ENCODE measurements at regions of chr17 and their contacts with region 1.

Region 1: DNA sequence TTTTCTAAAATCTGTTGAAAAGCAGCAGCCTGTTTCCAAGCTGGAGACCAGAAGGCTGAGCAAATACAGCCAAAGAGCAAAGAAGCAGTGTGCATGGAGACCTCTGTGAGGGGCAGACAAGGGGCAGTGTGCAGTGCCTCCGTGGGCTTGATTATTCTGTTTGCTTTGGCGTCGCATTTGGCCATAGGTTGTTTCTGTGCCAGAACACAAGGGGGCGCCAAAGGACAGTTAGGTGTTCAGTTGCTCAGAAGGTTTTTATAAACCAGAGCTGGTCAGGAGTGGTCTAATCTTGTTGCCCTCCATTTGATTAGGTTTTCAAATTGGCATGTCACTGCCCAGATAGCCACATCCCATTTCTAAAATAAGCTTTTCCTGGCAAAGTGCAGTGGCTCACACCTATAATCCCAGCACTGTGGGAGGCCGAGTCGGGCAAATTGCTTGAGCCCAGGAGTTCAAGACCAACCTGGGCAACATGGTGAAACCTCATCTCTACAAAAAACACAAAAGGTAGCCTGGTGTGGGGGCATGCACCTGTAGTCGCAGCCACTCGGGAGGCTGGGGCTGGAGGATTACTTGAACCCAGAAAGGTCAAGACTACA is 10.6 kb downstream of the MYH3 start:
- DNase-seq: peak; percentile 38 to 84 (median 67)
- ATAC-seq: peak; percentile 79
- H3K4me3 ChIP-seq: no peak overlapping the region
- H3K4me3 Mint-ChIP-seq: no peak overlapping the region
- H3K27ac ChIP-seq: no peak overlapping the region
- H3K27ac Mint-ChIP-seq: peak overlapping the region in 1 of 9 donors; percentile 9
- H3K4me1 ChIP-seq: no peaks in the 10 kb centered on the region
- H3K4me1 Mint-ChIP-seq: no peaks in the 10 kb centered on the region
- H3K27me3 ChIP-seq: no peaks in the 10 kb centered on the region
- H3K27me3 Mint-ChIP-seq: no peaks in the 10 kb centered on the region

Region 2: DNA sequence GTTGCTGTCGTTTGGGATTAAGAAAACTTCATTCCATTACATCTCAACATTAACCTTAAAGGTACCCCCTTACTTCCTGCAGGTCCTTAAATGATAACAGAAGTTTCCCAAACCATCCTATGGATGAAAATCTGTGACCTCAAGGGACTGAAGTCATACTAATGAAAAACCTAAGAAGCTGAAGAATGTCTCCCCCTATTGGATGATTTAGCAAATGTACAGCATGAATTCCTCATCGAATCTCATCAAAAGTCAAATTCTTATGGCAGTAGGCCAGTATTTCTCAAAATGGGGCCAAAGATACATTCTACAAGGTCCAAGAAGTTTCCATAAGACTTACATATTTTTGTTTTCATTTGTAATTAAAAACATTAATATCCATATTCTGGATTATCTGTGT is 37.4 kb after region 1 on chr17:
- CTCF ChIA-PET with region 1: no interaction called
- POLR2A ChIA-PET with region 1: no interaction called
- intact Hi-C with region 1: loop called in 1 of 2 experiments (anchors 1 kb)
- DNase-seq: no peak
- ATAC-seq: no peak
- H3K4me3 ChIP-seq: no peak overlapping the region
- H3K4me3 Mint-ChIP-seq: no peak overlapping the region
- H3K27ac ChIP-seq: no peak overlapping the region
- H3K27ac Mint-ChIP-seq: peak overlapping the region in 1 of 9 donors; percentile 18
- H3K4me1 ChIP-seq: no peaks in the 10 kb centered on the region
- H3K4me1 Mint-ChIP-seq: peaks cover 3 to 13% (median 11%) of the 10 kb centered on the region in 7 donors
- H3K27me3 ChIP-seq: no peaks in the 10 kb centered on the region
- H3K27me3 Mint-ChIP-seq: no peaks in the 10 kb centered on the region

Region 3: DNA sequence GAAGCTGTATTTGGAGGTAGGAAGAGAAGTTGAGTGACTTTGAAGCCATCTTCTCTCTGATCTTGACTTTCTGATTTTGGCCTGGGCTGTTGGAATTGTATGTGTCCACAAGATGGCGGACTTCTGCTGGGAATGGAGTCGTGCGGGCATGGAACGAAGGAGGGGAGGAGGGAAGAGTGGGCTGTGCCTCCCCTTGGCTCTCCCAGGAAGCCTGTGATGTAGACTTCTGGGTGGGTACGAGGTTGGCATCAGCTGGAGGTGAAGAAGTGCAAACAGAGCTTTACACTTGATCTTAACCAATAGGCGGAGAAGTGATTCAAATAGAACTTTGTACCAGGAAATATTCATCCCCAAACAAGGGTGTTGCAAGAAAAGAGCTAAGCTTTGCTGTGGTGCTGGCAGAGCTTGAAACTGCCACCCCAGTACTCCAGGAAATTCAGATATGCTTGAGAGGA is 90.7 kb after region 1 on chr17:
- CTCF ChIA-PET with region 1: interaction called, 12 read pairs
- POLR2A ChIA-PET with region 1: no interaction called
- intact Hi-C with region 1: loop called in 1 of 2 experiments (anchors 2 kb)
- DNase-seq: peak in 6 of 9 donors; percentile 21 to 58 (median 46)
- ATAC-seq: peak; percentile 71
- H3K4me3 ChIP-seq: no peak overlapping the region
- H3K4me3 Mint-ChIP-seq: peak overlapping the region in 8 of 10 donors; percentile 5 to 57 (median 39)
- H3K27ac ChIP-seq: no peak overlapping the region
- H3K27ac Mint-ChIP-seq: peak overlapping the region in 7 of 9 donors; percentile 34 to 85 (median 66)
- H3K4me1 ChIP-seq: peaks cover 0 to 9% of the 10 kb centered on the region in 2 donors
- H3K4me1 Mint-ChIP-seq: peaks cover 2 to 28% (median 13%) of the 10 kb centered on the region in 7 donors
- H3K27me3 ChIP-seq: no peaks in the 10 kb centered on the region
- H3K27me3 Mint-ChIP-seq: peaks cover 0 to 10% (median 0%) of the 10 kb centered on the region in 5 donors

Measured in naive thymus-derived CD4-positive, alpha-beta T cell (primary cell).